ENCODE measurements at regions of chr11 and their contacts with region 1.

Region 1: GRCh38 chr11:9613118-9613829 is 39.8 kb downstream of the WEE1 start:
- DNase-seq: peak; percentile 80
- ATAC-seq: peak; percentile 35
- H3K4me3 Mint-ChIP-seq: peak overlapping the region; percentile 92
- H3K27ac Mint-ChIP-seq: peak overlapping the region; percentile 100
- H3K4me1 Mint-ChIP-seq: peaks cover 92% of the 10 kb centered on the region
- H3K27me3 Mint-ChIP-seq: no peaks in the 10 kb centered on the region
- CTCF ChIP-seq: peak; percentile 74

Region 2: DNA sequence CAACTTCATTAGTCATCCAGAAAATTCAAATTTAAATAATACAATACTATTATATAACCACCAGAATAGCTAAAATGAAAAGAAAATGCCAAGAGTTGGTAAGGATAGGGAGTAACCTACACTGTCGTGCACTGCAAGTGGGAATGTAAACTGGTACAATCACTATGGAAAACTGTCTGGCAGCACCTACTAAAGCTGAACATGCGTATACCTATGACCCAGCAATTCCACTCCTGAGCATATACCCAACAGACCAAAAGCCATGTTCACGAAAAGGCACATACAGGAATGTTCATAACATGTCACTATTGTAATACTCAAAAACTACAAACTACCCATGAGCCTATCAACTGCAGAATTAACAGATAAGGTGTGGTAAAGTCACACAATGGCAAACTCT is 380.8 kb before region 1 on chr11:
- CTCF ChIA-PET with region 1: no interaction called
- POLR2A ChIA-PET with region 1: no interaction called
- intact Hi-C with region 1: no loop called
- DNase-seq: no peak
- ATAC-seq: no peak
- H3K4me3 Mint-ChIP-seq: no peak overlapping the region
- H3K27ac Mint-ChIP-seq: no peak overlapping the region
- H3K4me1 Mint-ChIP-seq: peaks cover 21% of the 10 kb centered on the region
- H3K27me3 Mint-ChIP-seq: no peaks in the 10 kb centered on the region
- CTCF ChIP-seq: no peak

Region 3: GRCh38 chr11:9506489-9507276 is 106.6 kb before region 1 on chr11:
- CTCF ChIA-PET with region 1: interaction called, 18 read pairs
- POLR2A ChIA-PET with region 1: interaction called, 3 read pairs
- intact Hi-C with region 1: loop called (anchors 1 kb)
- DNase-seq: peak; percentile 42
- ATAC-seq: peak; percentile 80
- H3K4me3 Mint-ChIP-seq: no peak overlapping the region
- H3K27ac Mint-ChIP-seq: no peak overlapping the region
- H3K4me1 Mint-ChIP-seq: peaks cover 16% of the 10 kb centered on the region
- H3K27me3 Mint-ChIP-seq: no peaks in the 10 kb centered on the region
- CTCF ChIP-seq: peak; percentile 71

Region 4: GRCh38 chr11:9594267-9595046 is 18.8 kb before region 1 on chr11:
- CTCF ChIA-PET with region 1: interaction called, 44 read pairs
- POLR2A ChIA-PET with region 1: interaction called, 15 read pairs
- intact Hi-C with region 1: no loop called
- DNase-seq: no peak
- ATAC-seq: no peak
- H3K4me3 Mint-ChIP-seq: no peak overlapping the region
- H3K27ac Mint-ChIP-seq: peak overlapping the region; percentile 28
- H3K4me1 Mint-ChIP-seq: peaks cover 36% of the 10 kb centered on the region
- H3K27me3 Mint-ChIP-seq: no peaks in the 10 kb centered on the region
- CTCF ChIP-seq: no peak

Region 5: DNA sequence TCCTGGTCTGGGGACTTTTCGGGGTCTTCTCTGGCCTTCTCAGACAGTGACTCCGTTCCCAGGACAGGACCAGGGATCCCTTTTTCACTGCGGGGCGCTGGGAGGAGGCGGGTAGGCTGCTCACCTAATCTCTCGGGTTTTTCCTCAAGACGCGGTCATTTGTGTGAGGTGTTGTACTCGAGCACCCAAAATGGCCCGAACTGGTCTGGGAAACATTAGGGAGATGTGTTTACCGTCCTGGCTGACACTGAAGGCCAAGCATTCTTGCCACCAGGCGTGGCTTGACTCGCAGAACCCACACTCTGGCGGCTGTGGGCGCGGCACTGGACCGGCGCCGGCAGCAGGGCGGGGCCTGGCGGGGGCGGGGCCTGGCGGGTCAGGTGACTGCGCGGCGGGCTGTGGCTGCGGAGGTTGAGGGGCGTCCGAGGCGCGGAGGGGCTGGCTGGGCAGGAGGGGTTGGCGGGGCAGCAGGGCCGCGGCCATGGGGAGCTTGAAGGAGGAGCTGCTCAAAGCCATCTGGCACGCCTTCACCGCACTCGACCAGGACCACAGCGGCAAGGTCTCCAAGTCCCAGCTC is 50.5 kb after region 1 on chr11 and contains the start of gene SWAP70:
- CTCF ChIA-PET with region 1: interaction called, 8 read pairs
- POLR2A ChIA-PET with region 1: interaction called, 99 read pairs
- intact Hi-C with region 1: loop called (anchors 1 kb)
- DNase-seq: peak; percentile 97
- ATAC-seq: peak; percentile 83
- H3K4me3 Mint-ChIP-seq: peak within 1 kb of the TSS; percentile 96
- H3K27ac Mint-ChIP-seq: peak within 1 kb of the TSS; percentile 97
- H3K4me1 Mint-ChIP-seq: peaks cover 73% of the 10 kb centered on the region
- H3K27me3 Mint-ChIP-seq: no peaks in the 10 kb centered on the region
- CTCF ChIP-seq: no peak
- total RNA-seq, gene SWAP70: 277 and 288 TPM in 2 replicates

Region 6: GRCh38 chr11:9716275-9717039 is 103.2 kb after region 1 on chr11:
- CTCF ChIA-PET with region 1: interaction called, 10 read pairs
- POLR2A ChIA-PET with region 1: interaction called, 14 read pairs
- intact Hi-C with region 1: loop called (anchors 1 kb)
- DNase-seq: no peak
- ATAC-seq: peak; percentile 72
- H3K4me3 Mint-ChIP-seq: peak overlapping the region; percentile 71
- H3K27ac Mint-ChIP-seq: peak overlapping the region; percentile 87
- H3K4me1 Mint-ChIP-seq: peaks cover 92% of the 10 kb centered on the region
- H3K27me3 Mint-ChIP-seq: no peaks in the 10 kb centered on the region
- CTCF ChIP-seq: no peak

Region 7: DNA sequence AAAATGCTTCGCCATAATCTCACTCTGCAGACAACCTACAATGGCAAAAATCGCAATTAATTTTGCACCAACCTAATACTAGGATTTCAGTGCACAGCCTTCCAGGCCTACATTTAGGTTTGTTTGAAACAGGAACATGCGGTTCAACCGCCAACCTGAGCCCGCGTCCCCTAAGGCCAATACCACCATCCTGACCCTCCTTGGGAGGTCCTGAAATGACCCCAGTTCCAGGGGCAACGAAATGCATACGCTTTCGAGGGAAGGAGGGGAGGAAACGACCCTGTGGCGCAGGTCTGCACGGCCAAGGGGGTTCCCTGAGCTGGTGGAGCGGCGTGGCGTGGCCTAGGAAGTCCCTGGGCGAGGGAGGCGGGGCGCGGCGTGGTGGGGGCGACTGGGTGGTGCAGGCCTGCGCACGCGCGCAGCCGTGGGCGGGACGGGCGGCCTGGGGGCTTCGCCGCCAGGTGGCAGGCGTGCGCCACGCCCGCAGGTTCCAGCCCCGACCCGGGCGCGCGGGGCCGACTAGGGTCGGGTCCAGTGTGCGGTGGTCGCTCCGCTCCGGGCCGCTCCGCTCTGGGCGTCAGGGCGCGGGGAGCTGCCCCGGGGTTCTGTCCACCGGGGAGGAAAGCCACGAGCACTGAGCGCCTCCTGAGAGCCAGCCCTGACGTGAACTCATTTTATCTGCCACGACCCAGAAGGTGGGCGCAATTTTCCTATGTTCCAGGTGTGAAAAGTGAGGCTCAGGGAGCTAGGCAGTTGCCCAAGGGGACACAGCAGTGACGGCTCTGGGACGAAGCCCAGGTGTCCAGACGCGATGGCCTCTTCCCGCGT is 144.7 kb after region 1 on chr11:
- CTCF ChIA-PET with region 1: interaction called, 11 read pairs
- POLR2A ChIA-PET with region 1: interaction called, 37 read pairs
- intact Hi-C with region 1: loop called (anchors 1 kb)
- DNase-seq: peak; percentile 96
- ATAC-seq: peak; percentile 59
- H3K4me3 Mint-ChIP-seq: peak overlapping the region; percentile 87
- H3K27ac Mint-ChIP-seq: peak overlapping the region; percentile 98
- H3K4me1 Mint-ChIP-seq: peaks cover 81% of the 10 kb centered on the region
- H3K27me3 Mint-ChIP-seq: no peaks in the 10 kb centered on the region
- CTCF ChIP-seq: peak; percentile 47

Region 8: GRCh38 chr11:10450464-10451425 is 837.5 kb after region 1 on chr11:
- CTCF ChIA-PET with region 1: no interaction called
- POLR2A ChIA-PET with region 1: no interaction called
- intact Hi-C with region 1: loop called (anchors 2 kb)
- DNase-seq: peak; percentile 64
- ATAC-seq: peak; percentile 40
- H3K4me3 Mint-ChIP-seq: peak overlapping the region; percentile 90
- H3K27ac Mint-ChIP-seq: peak overlapping the region; percentile 94
- H3K4me1 Mint-ChIP-seq: peaks cover 60% of the 10 kb centered on the region
- H3K27me3 Mint-ChIP-seq: no peaks in the 10 kb centered on the region
- CTCF ChIP-seq: no peak